OCI-LY7 (cell line): ENCODE measurements at regions of chrX and their contacts with region 1.

Region 1: GRCh38 chrX:22095286-22095685 is 63.2 kb downstream of the PHEX start:
- DNase-seq: no peak
- H3K4me3 ChIP-seq: no peak overlapping the region
- H3K27ac ChIP-seq: no peak overlapping the region
- H3K4me1 ChIP-seq: no peaks in the 10 kb centered on the region
- CTCF ChIP-seq: no peak

Region 2: GRCh38 chrX:22021751-22022324 is 73.4 kb before region 1 on chrX:
- CTCF ChIA-PET with region 1: no interaction called
- POLR2A ChIA-PET with region 1: interaction called, 11 read pairs
- intact Hi-C with region 1: no loop called
- DNase-seq: no peak
- H3K4me3 ChIP-seq: no peak overlapping the region
- H3K27ac ChIP-seq: no peak overlapping the region
- H3K4me1 ChIP-seq: no peaks in the 10 kb centered on the region
- CTCF ChIP-seq: no peak